OCI-LY7 (cell line): ENCODE measurements at regions of chr16 and their contacts with region 1.

Region 1: DNA sequence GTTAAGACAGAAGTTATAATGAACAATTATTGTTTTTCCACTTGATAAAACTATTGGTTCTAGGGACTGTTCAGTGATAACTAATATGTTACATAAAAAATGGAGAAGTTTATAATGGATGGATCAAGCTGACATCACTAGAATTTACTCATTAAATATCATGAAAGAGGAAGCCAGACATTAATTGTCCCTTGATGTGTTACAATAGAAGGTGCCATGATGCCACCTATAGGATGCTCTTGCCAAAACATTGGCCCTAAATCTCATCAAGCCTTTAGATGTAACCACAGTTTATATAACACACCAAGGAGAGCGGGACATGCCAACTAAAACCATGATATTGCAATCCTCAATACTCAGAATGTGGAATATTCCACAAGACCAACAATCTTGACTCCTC is 147.9 kb upstream of the MON1B start:
- DNase-seq: peak; percentile 69
- H3K4me3 ChIP-seq: no peak overlapping the region
- H3K27ac ChIP-seq: no peak overlapping the region
- H3K4me1 ChIP-seq: no peaks in the 10 kb centered on the region
- CTCF ChIP-seq: peak; percentile 87

Region 2: GRCh38 chr16:76668207-76668725 is 374.8 kb before region 1 on chr16:
- CTCF ChIA-PET with region 1: no interaction called
- POLR2A ChIA-PET with region 1: no interaction called
- intact Hi-C with region 1: loop called (anchors 10 kb)
- DNase-seq: peak; percentile 23
- H3K4me3 ChIP-seq: no peak overlapping the region
- H3K27ac ChIP-seq: no peak overlapping the region
- H3K4me1 ChIP-seq: no peaks in the 10 kb centered on the region
- CTCF ChIP-seq: peak; percentile 39

Region 3: GRCh38 chr16:76854234-76854633 is 188.8 kb before region 1 on chr16:
- CTCF ChIA-PET with region 1: interaction called, 3 read pairs
- POLR2A ChIA-PET with region 1: no interaction called
- intact Hi-C with region 1: loop called (anchors 10 kb)
- DNase-seq: peak; percentile 38
- H3K4me3 ChIP-seq: no peak overlapping the region
- H3K27ac ChIP-seq: no peak overlapping the region
- H3K4me1 ChIP-seq: no peaks in the 10 kb centered on the region
- CTCF ChIP-seq: peak; percentile 68

Region 4: GRCh38 chr16:77064037-77064436 is 21.0 kb after region 1 on chr16:
- CTCF ChIA-PET with region 1: no interaction called
- POLR2A ChIA-PET with region 1: no interaction called
- intact Hi-C with region 1: no loop called
- DNase-seq: no peak
- H3K4me3 ChIP-seq: no peak overlapping the region
- H3K27ac ChIP-seq: no peak overlapping the region
- H3K4me1 ChIP-seq: peaks cover 37% of the 10 kb centered on the region
- CTCF ChIP-seq: no peak

Region 5: GRCh38 chr16:77093309-77093708 is 50.2 kb after region 1 on chr16:
- CTCF ChIA-PET with region 1: no interaction called
- POLR2A ChIA-PET with region 1: interaction called, 12 read pairs
- intact Hi-C with region 1: no loop called
- DNase-seq: no peak
- H3K4me3 ChIP-seq: no peak overlapping the region
- H3K27ac ChIP-seq: no peak overlapping the region
- H3K4me1 ChIP-seq: no peaks in the 10 kb centered on the region
- CTCF ChIP-seq: no peak